Colonic mucosa (tissue), 4 donors: ENCODE measurements at regions of chr4 and their contacts with region 1.

Region 1: DNA sequence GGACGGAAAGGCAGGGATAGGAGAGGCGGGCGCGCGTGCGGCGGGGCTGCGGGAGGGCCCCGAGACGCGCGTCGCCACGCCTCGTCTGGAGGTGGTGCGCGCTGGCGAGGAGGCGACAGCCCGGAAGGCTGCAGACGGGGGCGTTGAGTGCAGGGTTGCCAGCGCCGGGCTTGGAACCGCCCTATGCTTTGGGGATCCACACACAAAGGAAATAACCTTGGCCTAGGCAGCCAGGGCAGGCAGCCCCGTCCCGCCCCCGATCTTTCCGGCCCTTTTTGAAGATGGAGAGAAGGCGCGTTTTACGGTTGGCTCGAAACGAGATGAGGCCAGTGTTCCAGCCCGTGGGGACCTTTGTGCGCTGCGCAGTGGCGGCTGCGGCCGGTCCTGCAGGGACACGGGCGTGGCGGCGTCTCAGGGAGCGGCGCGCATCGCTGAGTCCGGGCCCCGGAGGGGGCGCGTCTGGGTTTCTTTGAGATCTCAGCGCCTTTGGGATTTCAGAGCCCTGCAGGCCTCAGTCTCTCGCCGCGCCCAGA is 50.8 kb upstream of the TRIM2 start:
- DNase-seq: peak; percentile 74
- H3K4me3 ChIP-seq: peak overlapping the region; percentile 45
- H3K27ac ChIP-seq: peak overlapping the region; percentile 64
- H3K4me1 ChIP-seq: no peaks in the 10 kb centered on the region
- H3K27me3 ChIP-seq: no peaks in the 10 kb centered on the region
- CTCF ChIP-seq: no peak

Region 2: DNA sequence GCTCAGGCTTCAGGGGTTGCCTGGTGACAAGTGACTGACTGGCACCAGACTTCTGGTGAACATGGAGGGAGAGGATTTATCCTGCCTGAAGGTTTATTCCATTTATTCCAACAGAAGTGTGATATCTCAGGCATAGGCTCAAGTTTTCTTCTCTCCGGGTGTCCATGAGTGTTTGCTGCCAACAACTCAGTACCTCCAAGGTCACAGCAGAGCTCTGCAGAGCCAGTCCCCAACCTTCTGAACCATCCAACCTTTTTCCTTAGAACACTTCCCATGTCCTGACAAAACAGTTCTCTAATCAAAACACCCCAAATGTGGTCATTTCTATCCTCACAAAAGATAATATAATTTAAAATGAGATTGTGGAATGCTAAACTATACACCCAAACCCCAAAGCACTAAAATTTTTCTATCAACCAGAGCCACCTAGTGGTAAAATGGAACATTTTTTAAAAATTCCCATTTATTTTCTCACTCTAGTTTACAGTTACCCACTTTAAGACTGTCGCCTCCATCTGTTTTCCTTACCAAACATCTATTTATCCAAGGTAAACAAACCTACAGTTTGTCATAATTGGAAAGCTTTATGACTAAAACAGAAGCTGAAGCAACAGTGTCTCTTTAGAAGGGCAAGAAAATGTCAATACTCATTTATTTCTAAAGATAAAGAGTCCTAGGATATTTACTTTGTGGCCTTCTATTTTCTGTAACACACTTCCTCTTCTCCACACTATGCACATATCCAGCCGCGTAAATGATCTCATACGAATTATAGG is 513.2 kb before region 1 on chr4:
- intact Hi-C with region 1: no loop called
- DNase-seq: no peak
- H3K4me3 ChIP-seq: no peak overlapping the region
- H3K27ac ChIP-seq: no peak overlapping the region
- H3K4me1 ChIP-seq: no peaks in the 10 kb centered on the region
- H3K27me3 ChIP-seq: no peaks in the 10 kb centered on the region
- CTCF ChIP-seq: peak; percentile 54

Region 3: GRCh38 chr4:152828122-152828521 is 325.3 kb before region 1 on chr4:
- intact Hi-C with region 1: no loop called
- DNase-seq: no peak
- H3K4me3 ChIP-seq: no peak overlapping the region
- H3K27ac ChIP-seq: no peak overlapping the region
- H3K4me1 ChIP-seq: no peaks in the 10 kb centered on the region
- H3K27me3 ChIP-seq: no peaks in the 10 kb centered on the region
- CTCF ChIP-seq: no peak

Region 4: DNA sequence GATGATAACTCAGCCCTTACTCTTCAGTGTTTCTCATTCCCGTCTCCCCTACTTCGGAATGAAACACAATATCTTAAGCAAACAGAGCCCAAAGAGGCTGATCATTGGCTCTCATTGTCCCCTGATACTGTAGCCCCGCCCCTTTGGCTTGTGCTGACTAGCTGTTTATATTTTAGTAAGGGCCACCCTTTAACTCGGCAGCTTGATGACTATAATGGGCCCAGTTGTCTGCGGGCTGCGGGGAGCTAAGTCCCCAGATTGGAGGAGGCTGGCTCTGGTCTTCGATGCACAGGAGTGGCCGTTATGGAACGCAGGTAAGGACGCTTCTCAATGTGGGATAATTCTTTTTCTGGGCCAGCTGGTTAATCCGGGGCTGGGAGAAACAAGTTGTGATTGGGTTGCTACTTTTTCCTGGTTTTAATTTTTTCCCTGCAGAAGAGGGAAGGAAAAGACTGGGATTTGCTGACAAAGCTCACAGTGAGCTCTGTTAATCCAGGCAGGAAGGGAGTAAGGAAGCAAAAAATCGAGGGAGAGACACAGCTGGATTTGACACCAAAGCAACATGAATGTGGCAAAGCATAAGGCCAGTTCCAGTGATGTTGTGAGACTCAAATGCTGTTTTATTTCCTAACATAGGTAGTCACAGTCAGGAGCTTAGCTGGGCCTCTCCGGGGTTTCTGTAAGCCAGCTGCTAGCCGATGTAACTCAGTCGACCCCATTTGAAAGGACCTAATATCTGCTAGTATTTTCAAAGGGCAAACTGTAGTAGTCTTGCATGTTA is 51.0 kb after region 1 on chr4 and contains the start of gene TRIM2:
- intact Hi-C with region 1: loop called (anchors 10 kb)
- DNase-seq: peak; percentile 92
- H3K4me3 ChIP-seq: peak within 1 kb of the TSS; percentile 40
- H3K27ac ChIP-seq: peak within 1 kb of the TSS; percentile 90
- H3K4me1 ChIP-seq: no peaks in the 10 kb centered on the region
- H3K27me3 ChIP-seq: no peaks in the 10 kb centered on the region
- CTCF ChIP-seq: no peak
- total RNA-seq, gene TRIM2: 120 to 151 TPM

Region 5: GRCh38 chr4:153374442-153374841 is 221.0 kb after region 1 on chr4:
- intact Hi-C with region 1: no loop called
- DNase-seq: no peak
- H3K4me3 ChIP-seq: no peak overlapping the region
- H3K27ac ChIP-seq: no peak overlapping the region
- H3K4me1 ChIP-seq: no peaks in the 10 kb centered on the region
- H3K27me3 ChIP-seq: no peaks in the 10 kb centered on the region
- CTCF ChIP-seq: no peak